ENCODE measurements at regions of chr3 and their contacts with region 1.

Region 1: GRCh38 chr3:49358217-49358883 is at the start of gene GPX1:
- DNase-seq: peak; percentile 60 to 80 (median 65)
- H3K4me3 ChIP-seq: peak within 1 kb of the TSS; percentile 78 to 87
- H3K4me3 Mint-ChIP-seq: peak within 1 kb of the TSS; percentile 91 to 97 (median 94)
- H3K27ac ChIP-seq: peak within 1 kb of the TSS; percentile 73
- H3K27ac Mint-ChIP-seq: peak within 1 kb of the TSS; percentile 93 to 98 (median 95)
- H3K4me1 ChIP-seq: peaks cover 26% of the 10 kb centered on the region
- H3K4me1 Mint-ChIP-seq: peaks cover 8 to 32% (median 20%) of the 10 kb centered on the region in 4 donors
- H3K27me3 ChIP-seq: no peaks in the 10 kb centered on the region
- H3K27me3 Mint-ChIP-seq: no peaks in the 10 kb centered on the region
- total RNA-seq, gene GPX1: 75.7 to 77.7 TPM

Region 2: DNA sequence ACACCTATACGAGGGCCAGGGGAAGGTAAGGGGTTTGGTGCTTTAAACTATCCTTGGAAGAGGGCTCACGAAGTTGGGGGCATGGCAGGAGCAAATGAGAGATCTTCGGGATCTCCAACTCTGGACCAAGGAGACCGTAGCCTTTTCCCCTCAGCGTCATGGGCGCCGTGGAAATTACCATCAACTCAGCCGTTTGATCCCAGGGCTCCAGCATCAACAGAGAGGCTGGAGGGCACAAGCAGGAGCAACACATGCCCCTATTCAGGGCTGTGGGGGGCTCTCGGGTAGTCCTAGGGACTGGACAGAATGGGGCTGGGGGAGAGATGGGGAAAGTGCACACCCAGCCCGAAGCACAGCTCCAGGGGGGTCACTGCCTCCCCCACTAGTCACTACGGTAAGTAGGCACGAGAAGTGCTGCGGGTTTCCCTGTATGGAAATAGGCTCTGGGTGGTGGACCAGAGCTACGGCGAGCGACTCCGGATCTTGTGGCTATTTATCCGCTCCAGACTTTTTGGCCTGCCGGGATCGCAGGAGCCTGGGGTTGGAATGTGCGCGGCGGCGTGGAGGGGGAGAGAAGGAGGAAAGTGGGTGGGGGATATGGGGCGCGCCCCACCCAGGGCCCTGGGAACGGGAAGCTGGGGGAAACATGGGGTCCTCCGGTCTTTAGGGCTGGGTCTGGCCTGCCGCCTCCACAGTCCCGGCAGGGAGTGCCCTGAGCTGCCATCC is 225.0 kb before region 1 on chr3:
- CTCF ChIA-PET with region 1: no interaction called
- POLR2A ChIA-PET with region 1: no interaction called
- intact Hi-C with region 1: no loop called
- DNase-seq: no peak
- H3K4me3 ChIP-seq: no peak overlapping the region
- H3K4me3 Mint-ChIP-seq: no peak overlapping the region
- H3K27ac ChIP-seq: no peak overlapping the region
- H3K27ac Mint-ChIP-seq: no peak overlapping the region
- H3K4me1 ChIP-seq: no peaks in the 10 kb centered on the region
- H3K4me1 Mint-ChIP-seq: no peaks in the 10 kb centered on the region
- H3K27me3 ChIP-seq: no peaks in the 10 kb centered on the region
- H3K27me3 Mint-ChIP-seq: peaks cover 5 to 18% of the 10 kb centered on the region in 2 donors

Region 3: DNA sequence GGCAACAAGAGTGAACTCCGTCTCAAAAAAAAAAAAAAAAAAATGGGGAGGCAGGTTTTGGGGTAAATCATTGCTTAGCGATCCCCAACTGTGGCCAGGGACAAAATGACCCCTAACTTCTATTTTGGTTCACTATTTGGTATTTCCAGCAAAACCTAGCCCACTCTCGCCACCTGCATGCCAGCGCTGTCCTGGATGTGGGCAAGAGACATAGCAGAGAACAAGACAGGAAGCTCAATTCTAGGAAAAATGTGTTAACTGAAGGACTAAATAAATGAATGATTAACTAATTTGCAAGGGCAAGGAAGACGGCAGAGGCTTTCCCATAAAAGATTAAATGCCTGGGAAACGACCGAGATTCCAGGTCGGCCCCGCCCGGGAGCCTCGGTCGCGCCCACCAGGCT is 70.3 kb after region 1 on chr3:
- CTCF ChIA-PET with region 1: no interaction called
- POLR2A ChIA-PET with region 1: interaction called, 7 read pairs
- intact Hi-C with region 1: loop called (anchors 1 kb)
- DNase-seq: no peak
- H3K4me3 ChIP-seq: peak overlapping the region; percentile 55 to 86
- H3K4me3 Mint-ChIP-seq: peak overlapping the region; percentile 90 to 97 (median 95)
- H3K27ac ChIP-seq: peak overlapping the region; percentile 63
- H3K27ac Mint-ChIP-seq: peak overlapping the region; percentile 85 to 97 (median 94)
- H3K4me1 ChIP-seq: peaks cover 22% of the 10 kb centered on the region
- H3K4me1 Mint-ChIP-seq: peaks cover 8 to 33% (median 22%) of the 10 kb centered on the region in 4 donors
- H3K27me3 ChIP-seq: no peaks in the 10 kb centered on the region
- H3K27me3 Mint-ChIP-seq: no peaks in the 10 kb centered on the region

Measured in CD4-positive, alpha-beta memory T cell (primary cell).